H1 (cell line): ENCODE measurements at regions of chr21 and their contacts with region 1.

Region 1: GRCh38 chr21:44972821-44973220 is 33.0 kb downstream of the SLX9 start:
- DNase-seq: no peak
- H3K4me3 ChIP-seq: no peak overlapping the region
- H3K27ac ChIP-seq: no peak overlapping the region
- H3K4me1 ChIP-seq: no peaks in the 10 kb centered on the region; a peak in 1 of 7 replicates
- H3K27me3 ChIP-seq: no peaks in the 10 kb centered on the region
- CTCF ChIP-seq: no peak
- EP300 ChIP-seq: no peak
- POLR2A ChIP-seq: no peak
- RAD21 ChIP-seq: no peak

Region 2: DNA sequence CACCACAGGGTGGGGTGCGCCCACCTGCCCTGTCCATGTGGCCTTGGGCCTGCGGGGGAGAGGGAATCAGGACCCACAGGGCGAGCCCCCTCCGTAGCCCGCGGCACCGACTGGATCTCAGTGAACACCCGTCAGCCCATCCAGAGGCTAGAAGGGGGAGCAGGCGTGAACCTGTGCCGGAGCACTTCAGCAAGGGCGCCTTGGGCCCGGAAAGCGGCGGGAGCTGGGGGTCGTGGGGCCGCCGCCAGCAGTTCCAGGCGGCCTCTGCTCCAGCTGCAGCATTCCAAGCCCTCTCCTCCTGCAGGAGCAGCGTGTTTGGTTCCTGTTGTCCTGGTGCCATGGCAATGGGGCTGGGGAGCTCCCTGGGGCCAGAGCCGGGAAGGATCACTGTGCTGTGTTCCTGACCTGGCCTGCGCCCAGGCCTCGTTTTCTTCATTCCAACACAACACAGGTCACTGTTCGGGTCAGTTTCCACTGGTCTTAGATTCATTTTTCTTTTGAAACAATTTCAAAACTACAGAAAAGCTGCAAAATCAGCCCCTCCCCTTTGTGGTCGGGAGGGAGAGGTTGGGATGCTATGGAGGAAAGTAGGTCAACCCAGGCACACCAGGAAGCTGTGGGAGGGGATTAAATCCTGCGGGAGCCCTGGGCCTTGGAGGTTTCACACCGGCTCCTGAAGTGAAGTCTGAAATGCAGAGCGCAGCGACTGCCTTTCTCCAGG is 14.2 kb before region 1 on chr21:
- CTCF ChIA-PET with region 1: interaction called, 13 read pairs
- POLR2A ChIA-PET with region 1: interaction called, 8 read pairs
- DNase-seq: no peak
- H3K4me3 ChIP-seq: no peak overlapping the region
- H3K27ac ChIP-seq: 0 out of 2 replicates have a peak overlapping the region, but pooled peaks have one; percentile 38
- H3K4me1 ChIP-seq: no peaks in the 10 kb centered on the region
- H3K27me3 ChIP-seq: no peaks in the 10 kb centered on the region
- CTCF ChIP-seq: no peak
- EP300 ChIP-seq: no peak
- POLR2A ChIP-seq: no peak
- RAD21 ChIP-seq: no peak

Region 3: DNA sequence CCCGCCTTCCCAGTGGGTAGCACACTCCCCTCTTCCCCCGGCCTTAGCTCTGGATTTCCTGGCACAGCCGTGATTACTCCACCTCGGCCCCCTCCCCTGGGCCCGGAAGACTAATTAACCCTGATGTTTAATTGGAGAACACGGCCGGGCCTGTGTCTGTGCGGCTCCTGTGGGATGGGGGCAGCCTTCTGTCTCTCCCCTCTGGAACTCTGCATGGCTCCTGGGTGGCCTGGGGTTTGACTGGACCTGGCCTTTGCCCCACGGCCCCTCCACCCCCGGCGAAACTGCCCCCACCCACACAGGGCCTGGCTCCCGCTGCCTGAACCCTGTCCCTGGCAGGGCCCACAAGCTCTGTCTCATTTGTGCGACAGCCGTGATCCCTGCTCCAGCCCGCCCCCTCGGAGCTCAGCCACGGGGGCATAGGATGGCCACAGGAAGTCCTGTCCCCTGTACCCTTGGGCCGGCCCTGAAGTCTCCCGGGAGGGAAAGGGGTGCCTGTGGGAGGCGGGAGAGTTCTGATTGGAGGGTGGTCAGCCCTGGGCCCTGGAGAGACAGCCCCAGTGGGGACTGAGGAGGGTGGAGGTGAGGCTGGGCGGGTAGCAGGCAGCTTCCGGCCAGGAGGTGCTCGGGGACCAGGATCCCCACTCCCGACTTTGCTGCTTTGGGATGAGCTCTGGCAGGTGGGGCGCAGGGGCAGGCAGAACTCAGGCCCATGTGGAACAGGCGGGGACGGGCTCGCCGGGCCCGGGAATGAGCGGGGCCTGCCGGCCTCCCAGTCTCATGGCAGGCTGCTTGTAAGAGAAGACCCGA is 12.0 kb after region 1 on chr21:
- CTCF ChIA-PET with region 1: interaction called, 13 read pairs
- POLR2A ChIA-PET with region 1: interaction called, 5 read pairs
- DNase-seq: no peak
- H3K4me3 ChIP-seq: no peak overlapping the region
- H3K27ac ChIP-seq: no peak overlapping the region
- H3K4me1 ChIP-seq: peaks cover 0 to 3% (median 0%) of the 10 kb centered on the region in 4 experiments; a peak in 1 of 7 replicates
- H3K27me3 ChIP-seq: no peaks in the 10 kb centered on the region; a peak in 3 of 7 replicates
- CTCF ChIP-seq: no peak
- EP300 ChIP-seq: no peak
- POLR2A ChIP-seq: no peak
- RAD21 ChIP-seq: no peak